ENCODE measurements at regions of chr11 and their contacts with region 1.

Region 1: GRCh38 chr11:1652771-1653540 is 23.4 kb downstream of the KRTAP5-5 start:
- DNase-seq: peak; percentile 81
- ATAC-seq: peak; percentile 84
- H3K4me3 Mint-ChIP-seq: no peak overlapping the region
- H3K27ac Mint-ChIP-seq: no peak overlapping the region
- H3K4me1 Mint-ChIP-seq: no peaks in the 10 kb centered on the region
- H3K27me3 Mint-ChIP-seq: peaks cover 13% of the 10 kb centered on the region

Region 2: DNA sequence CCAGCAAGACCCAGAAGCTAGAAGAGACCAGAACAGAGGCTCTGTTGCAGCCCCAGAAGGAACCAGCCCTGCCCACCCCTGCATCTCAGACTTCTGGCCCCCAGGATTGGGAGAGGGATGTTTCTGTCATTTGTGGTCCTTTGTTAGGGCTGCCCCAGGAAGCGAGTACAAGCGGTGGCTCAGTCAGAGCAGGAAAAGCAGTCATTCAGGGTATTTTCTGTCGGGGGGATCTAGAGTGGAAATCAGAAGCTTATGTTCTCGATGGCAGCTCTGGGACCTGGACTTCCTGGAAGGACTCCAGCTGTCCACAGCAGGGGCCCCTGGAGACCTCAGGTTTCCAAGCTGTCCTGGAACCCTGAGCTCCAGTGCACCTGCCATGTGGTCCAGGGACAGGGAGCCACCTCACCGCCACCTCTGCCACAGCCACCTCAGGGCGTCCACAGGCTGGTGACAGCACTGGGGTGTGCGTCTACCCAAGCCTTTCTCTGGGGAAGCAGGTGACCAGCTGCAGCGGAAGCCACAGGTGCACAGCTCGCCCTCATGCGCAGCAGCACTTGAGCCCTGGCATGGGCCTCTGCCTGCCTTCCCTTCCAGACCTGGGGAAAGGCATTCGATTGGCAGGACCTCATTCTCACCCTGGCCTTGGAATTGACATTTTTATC is 20.8 kb before region 1 on chr11:
- CTCF ChIA-PET with region 1: interaction called, 49 read pairs
- POLR2A ChIA-PET with region 1: no interaction called
- DNase-seq: no peak
- ATAC-seq: no peak
- H3K4me3 Mint-ChIP-seq: no peak overlapping the region
- H3K27ac Mint-ChIP-seq: no peak overlapping the region
- H3K4me1 Mint-ChIP-seq: no peaks in the 10 kb centered on the region
- H3K27me3 Mint-ChIP-seq: peaks cover 12% of the 10 kb centered on the region

Region 3: DNA sequence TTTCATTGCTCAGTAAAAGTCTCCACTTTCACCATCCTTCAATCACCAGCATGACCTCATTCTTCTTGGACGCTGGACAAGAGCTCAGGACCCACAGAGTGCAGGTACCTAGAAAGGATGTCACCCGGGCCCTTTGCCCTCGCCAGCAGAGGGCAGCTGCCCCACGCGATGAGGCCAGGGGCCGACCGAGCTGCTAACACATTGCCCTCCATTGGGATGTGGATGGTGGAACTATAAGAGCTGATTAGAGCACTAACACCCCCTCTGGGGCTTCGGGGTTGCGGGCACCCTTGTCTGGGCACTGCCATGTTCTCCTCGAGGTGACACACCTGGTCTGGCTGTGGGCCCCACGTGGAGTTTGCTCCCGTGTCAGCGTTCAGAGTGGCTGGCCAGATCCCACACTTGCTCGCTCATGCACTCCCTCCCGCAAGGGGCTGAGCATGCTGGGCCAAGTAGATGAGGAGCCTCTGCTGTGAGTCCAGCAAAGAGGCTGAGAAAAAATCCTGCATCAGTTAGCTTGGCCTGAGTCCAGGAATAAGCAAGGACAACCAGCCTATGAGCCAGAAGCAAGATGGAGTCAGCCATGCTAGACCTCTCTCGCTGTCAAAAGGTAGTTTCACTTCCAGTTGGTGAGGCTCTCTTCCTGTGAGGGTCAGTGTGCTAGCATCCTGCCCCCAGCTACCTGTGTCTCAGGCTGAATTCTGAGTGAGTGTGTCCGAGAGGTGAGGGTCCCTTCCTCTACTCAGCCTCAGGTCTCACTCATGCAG is 53.9 kb after region 1 on chr11:
- CTCF ChIA-PET with region 1: interaction called, 11 read pairs
- POLR2A ChIA-PET with region 1: no interaction called
- DNase-seq: peak; percentile 44
- ATAC-seq: peak; percentile 44
- H3K4me3 Mint-ChIP-seq: no peak overlapping the region
- H3K27ac Mint-ChIP-seq: no peak overlapping the region
- H3K4me1 Mint-ChIP-seq: peaks cover 25% of the 10 kb centered on the region
- H3K27me3 Mint-ChIP-seq: peaks cover 33% of the 10 kb centered on the region

Region 4: DNA sequence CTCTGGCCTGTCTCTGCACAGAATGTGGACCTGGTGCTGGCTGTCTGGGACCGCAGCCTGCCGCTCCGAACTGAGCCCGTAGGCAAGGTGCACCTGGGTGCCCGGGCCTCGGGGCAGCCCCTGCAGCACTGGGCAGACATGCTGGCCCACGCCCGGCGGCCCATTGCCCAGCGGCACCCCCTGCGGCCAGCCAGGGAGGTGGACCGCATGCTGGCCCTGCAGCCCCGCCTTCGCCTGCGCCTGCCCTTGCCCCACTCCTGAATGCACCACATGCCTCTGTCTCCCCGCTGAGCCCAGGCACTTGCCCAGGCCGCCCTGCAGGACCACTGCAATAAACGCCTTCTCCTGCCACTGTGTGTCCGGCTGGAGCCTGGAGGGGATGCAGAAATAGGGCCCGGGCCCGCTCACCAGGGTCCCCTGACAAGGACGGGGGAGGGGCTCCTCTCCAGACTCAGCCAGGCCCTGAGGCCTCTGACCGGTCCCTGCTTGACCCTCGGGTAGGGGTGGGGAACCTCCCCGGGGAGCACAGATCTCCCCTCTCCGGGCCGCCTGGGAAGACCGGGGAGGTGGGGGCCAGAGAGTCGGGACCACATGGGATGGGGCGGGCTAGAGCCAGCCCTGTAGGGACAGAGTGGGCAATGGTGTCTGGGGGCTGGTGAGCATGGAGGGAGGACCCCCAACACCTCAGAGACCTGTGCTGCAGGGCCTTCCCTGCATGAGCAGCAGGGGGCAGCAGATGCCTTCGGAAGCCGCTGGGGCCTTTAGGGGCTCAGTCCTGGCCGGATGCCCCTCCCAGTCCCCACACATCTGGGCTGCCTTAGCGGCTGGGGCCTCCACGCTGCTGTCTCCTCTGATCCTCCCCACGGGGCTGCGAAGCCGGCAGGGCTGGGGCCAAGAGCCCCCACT is 184.5 kb after region 1 on chr11:
- CTCF ChIA-PET with region 1: interaction called, 67 read pairs
- POLR2A ChIA-PET with region 1: no interaction called
- DNase-seq: peak; percentile 93
- ATAC-seq: peak; percentile 95
- H3K4me3 Mint-ChIP-seq: no peak overlapping the region
- H3K27ac Mint-ChIP-seq: no peak overlapping the region
- H3K4me1 Mint-ChIP-seq: peaks cover 8% of the 10 kb centered on the region
- H3K27me3 Mint-ChIP-seq: peaks cover 4% of the 10 kb centered on the region

Region 5: DNA sequence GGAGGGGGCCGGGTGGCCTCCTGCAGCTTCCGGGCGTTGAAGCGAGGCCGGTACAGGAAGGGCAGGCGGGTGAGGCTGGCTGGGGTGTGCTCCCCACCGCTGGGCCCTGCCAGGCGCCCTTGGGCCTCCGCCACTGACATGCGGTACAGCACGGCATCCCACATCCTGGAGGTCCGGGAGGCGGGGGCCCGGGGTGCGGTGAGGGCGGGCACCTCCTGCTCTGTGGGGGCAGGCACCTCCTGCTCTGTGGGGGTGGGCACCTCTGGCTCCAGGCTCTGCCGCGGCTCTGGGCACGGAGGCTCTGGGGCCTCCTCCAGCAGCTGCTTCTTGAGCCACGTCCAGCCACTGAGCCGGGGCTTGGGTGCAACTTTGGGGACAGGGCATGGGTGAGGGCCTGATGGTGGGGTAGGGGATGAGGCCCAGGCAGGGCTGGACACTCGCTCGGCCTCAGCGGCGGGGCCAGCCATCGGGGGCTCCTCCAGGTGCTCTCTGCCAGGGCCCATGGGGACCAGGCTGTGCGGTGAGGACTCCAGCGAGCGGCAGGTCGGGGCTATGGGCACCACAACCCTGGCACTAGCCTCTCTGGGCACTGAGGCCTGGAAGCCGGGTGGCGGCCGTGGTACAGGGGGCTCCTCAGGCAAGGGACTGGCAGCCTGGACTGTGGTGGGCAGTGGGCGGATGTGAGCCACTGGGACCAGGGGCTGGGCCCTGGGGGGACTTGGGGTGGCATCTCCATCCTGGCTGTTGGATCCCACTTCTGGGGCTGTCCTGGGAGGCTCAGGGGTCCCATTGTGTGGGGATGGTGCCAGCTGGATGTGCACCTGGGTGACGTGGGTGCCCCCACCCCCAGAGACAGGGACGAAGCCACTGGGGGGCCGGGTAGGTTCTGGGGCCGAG is 236.5 kb after region 1 on chr11:
- CTCF ChIA-PET with region 1: no interaction called
- POLR2A ChIA-PET with region 1: no interaction called
- DNase-seq: peak; percentile 91
- ATAC-seq: peak; percentile 75
- H3K4me3 Mint-ChIP-seq: peak overlapping the region; percentile 70
- H3K27ac Mint-ChIP-seq: peak overlapping the region; percentile 88
- H3K4me1 Mint-ChIP-seq: peaks cover 54% of the 10 kb centered on the region
- H3K27me3 Mint-ChIP-seq: no peaks in the 10 kb centered on the region